ENCODE measurements at regions of chr15 and their contacts with region 1.

Region 1: DNA sequence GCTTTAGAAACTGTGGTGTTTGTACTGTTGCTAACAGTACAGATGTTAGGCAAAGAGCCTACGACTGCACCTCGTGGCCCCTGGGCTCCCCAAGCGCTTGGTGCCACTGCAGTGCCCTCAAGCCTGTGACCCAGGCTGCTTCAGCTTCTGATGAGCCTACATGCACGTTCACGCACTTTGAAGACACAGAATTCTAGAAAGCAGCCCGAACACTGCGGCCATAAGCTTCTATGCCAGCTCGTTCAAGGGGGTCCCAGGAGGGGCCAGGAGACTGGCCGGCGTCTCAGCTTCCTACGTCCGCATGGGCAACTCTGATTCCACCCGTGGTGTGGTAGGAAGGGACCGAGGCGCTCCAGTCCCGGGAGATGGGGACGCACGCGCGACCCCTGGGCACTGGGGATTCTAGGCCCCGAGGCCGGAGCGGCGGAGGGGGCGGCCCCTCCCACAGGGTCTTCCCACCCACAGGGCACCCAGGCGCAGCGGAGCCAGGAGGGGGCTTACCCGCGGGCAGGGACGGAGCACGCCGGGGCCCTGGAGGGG is 653 bp downstream of the MYO5C start:
- DNase-seq: no peak
- ATAC-seq: no peak

Region 2: GRCh38 chr15:51641528-51642130 is 653.3 kb before region 1 on chr15:
- intact Hi-C with region 1: loop called (anchors 5 kb)
- DNase-seq: no peak
- ATAC-seq: no peak

Region 3: DNA sequence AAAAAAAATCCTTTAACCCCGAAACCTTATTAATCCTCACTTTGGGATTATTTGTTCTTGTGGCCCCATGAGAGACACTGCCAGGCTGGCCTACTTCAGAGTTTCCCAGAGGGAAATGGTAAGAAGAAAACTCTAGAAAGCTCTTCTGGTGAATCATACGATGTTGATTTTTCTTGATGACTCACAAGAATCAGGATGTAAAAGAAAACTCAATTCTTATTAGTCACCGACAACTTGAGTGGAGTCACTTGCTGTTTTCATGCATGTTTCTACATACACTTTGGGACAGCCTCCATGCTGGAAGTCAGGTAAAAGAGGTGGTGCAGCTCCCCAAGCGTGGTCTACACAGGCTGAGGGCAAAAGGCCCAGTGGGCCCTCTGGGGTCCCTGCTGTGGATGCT is 42.2 kb before region 1 on chr15:
- intact Hi-C with region 1: no loop called
- DNase-seq: no peak
- ATAC-seq: no peak

Region 4: GRCh38 chr15:53833134-53833624 is 1538.2 kb after region 1 on chr15:
- intact Hi-C with region 1: no loop called
- DNase-seq: no peak
- ATAC-seq: peak; percentile 71

Measured in sciatic nerve (tissue), 2 donors.